Activated naive CD4-positive, alpha-beta T cell treated with anti-CD3 and anti-CD28 coated beads for 36 hours (primary cell): ENCODE measurements at regions of chr1 and their contacts with region 1.

Region 1: GRCh38 chr1:156910309-156910782 is 10.1 kb upstream of the LRRC71 start:
- DNase-seq: peak; percentile 63
- H3K4me3 Mint-ChIP-seq: no peak overlapping the region
- H3K27ac Mint-ChIP-seq: no peak overlapping the region
- H3K4me1 Mint-ChIP-seq: no peaks in the 10 kb centered on the region
- H3K27me3 Mint-ChIP-seq: peaks cover 5% of the 10 kb centered on the region

Region 2: GRCh38 chr1:156927215-156928042 is 17.1 kb after region 1 on chr1:
- CTCF ChIA-PET with region 1: interaction called, 15 read pairs
- intact Hi-C with region 1: loop called (anchors 1 kb)
- DNase-seq: peak; percentile 84
- H3K4me3 Mint-ChIP-seq: no peak overlapping the region
- H3K27ac Mint-ChIP-seq: no peak overlapping the region
- H3K4me1 Mint-ChIP-seq: peaks cover 14% of the 10 kb centered on the region
- H3K27me3 Mint-ChIP-seq: peaks cover 77% of the 10 kb centered on the region

Region 3: GRCh38 chr1:156961709-156962108 is 51.4 kb after region 1 on chr1:
- CTCF ChIA-PET with region 1: no interaction called
- intact Hi-C with region 1: loop called (anchors 5 kb)
- DNase-seq: peak; percentile 63
- H3K4me3 Mint-ChIP-seq: no peak overlapping the region
- H3K27ac Mint-ChIP-seq: no peak overlapping the region
- H3K4me1 Mint-ChIP-seq: peaks cover 27% of the 10 kb centered on the region
- H3K27me3 Mint-ChIP-seq: no peaks in the 10 kb centered on the region

Region 4: DNA sequence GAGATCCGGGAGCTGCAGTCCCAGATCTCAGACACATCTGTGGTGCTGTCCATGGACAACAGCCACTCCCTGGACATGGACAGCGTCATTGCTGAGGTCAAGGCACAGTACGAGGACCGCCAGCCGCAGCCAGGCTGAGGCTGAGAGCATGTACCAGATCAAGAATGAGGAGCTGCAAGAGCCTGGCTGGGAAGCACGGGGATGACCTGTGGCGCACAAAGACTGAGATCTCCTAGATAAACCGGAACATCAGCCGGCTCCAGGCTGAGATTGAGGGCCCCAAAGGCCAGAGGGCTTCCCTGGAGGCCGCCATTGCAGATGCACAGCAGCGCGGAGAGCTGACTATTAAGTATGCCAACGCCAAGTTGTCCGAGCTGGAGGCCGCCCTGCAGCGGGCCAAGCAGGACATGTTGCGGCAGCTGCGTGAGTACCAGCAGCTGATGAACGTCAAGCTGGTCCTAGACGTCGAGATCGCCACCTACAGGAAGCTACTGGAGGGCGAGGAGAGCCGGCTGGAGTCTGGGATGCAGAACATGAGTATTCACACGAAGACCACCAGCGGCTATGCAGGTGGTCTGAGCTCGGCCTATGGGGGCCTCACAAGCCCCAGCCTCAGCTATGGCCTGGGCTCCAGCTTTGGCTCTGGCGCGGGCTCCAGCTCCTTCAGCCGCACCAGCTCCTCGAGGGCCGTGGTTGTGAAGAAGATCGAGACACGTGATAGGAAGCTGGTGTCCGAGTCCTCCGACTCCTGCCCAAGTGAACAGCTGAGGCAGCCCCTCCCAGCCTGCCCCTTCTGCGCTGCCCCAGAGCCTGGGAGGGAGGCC is 163.8 kb after region 1 on chr1:
- CTCF ChIA-PET with region 1: interaction called, 4 read pairs
- intact Hi-C with region 1: loop called (anchors 1 kb)
- DNase-seq: peak; percentile 72
- H3K4me3 Mint-ChIP-seq: no peak overlapping the region
- H3K27ac Mint-ChIP-seq: no peak overlapping the region
- H3K4me1 Mint-ChIP-seq: peaks cover 1% of the 10 kb centered on the region
- H3K27me3 Mint-ChIP-seq: peaks cover 10% of the 10 kb centered on the region

Region 5: GRCh38 chr1:157156058-157156541 is 245.8 kb after region 1 on chr1:
- CTCF ChIA-PET with region 1: no interaction called
- intact Hi-C with region 1: loop called (anchors 5 kb)
- DNase-seq: peak; percentile 81
- H3K4me3 Mint-ChIP-seq: no peak overlapping the region
- H3K27ac Mint-ChIP-seq: no peak overlapping the region
- H3K4me1 Mint-ChIP-seq: peaks cover 14% of the 10 kb centered on the region
- H3K27me3 Mint-ChIP-seq: no peaks in the 10 kb centered on the region